Activated CD8-positive, alpha-beta T cell treated with anti-CD3 and anti-CD28 coated beads, Interleukin-2, amount 10 ng/mL, durations not matched to agents 7 days and 5 days (primary cell): ENCODE measurements at regions of chr16 and their contacts with region 1.

Region 1: DNA sequence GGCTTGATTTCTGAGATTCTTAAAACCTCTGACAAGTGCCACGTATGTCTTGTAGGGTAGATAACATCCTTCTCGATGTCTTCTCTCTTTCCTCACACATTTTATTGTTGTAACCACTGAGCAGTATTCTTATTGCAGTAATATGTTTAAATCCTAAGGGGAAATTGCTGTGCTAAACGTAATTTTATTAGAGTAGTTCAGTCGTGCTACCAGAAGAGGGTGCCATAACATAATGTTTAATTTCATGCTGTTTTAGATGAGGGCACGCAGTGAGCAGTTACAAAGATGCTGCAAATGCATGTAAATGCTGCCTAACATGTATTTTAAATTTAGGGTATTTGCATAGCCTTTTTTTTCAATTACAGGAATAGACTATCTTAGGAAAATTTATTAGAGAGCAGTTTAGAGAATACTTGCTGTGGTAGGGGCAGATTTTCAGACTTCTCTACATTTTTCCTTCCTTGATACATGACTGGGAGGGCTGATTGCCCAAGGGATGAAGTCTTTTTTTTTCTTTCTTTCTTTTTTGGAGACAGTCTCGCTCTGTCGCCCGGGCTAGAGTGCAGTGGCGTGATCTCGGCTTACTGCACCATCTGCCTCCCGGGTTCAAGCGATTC is 51.7 kb downstream of the GAN start:
- DNase-seq: no peak
- ATAC-seq: peak; percentile 63
- H3K4me3 Mint-ChIP-seq: no peak overlapping the region
- H3K27ac Mint-ChIP-seq: no peak overlapping the region
- H3K4me1 Mint-ChIP-seq: peaks cover 11% of the 10 kb centered on the region
- H3K27me3 Mint-ChIP-seq: no peaks in the 10 kb centered on the region

Region 2: DNA sequence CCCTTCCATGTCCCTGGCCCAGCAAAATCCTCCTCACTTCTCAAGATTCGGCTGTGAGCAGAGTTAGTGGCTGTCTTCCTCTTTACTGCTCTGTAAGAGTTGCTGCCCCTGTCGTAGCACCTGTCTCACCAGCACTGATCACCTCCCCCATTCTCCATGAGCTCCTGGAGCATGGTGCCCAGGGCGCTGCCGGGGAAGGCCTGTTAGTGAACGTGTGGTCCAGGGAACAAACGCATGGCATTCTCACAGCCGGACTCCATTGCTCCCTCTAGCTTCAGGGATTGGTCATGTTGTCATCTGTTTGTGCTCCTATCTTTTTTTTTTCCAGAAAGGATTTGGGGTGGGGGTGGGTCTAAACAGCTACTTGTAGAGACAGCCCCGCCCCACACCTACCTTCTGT is 219.4 kb after region 1 on chr16:
- CTCF ChIA-PET with region 1: no interaction called
- POLR2A ChIA-PET with region 1: no interaction called
- DNase-seq: no peak
- ATAC-seq: no peak
- H3K4me3 Mint-ChIP-seq: no peak overlapping the region
- H3K27ac Mint-ChIP-seq: peak overlapping the region; percentile 41
- H3K4me1 Mint-ChIP-seq: no peaks in the 10 kb centered on the region
- H3K27me3 Mint-ChIP-seq: no peaks in the 10 kb centered on the region

Region 3: GRCh38 chr16:81723098-81723723 is 356.8 kb after region 1 on chr16:
- CTCF ChIA-PET with region 1: interaction called, 13 read pairs
- POLR2A ChIA-PET with region 1: no interaction called
- DNase-seq: peak; percentile 72
- ATAC-seq: peak; percentile 85
- H3K4me3 Mint-ChIP-seq: no peak overlapping the region
- H3K27ac Mint-ChIP-seq: no peak overlapping the region
- H3K4me1 Mint-ChIP-seq: peaks cover 16% of the 10 kb centered on the region
- H3K27me3 Mint-ChIP-seq: peaks cover 15% of the 10 kb centered on the region

Region 4: GRCh38 chr16:81730090-81731051 is 363.9 kb after region 1 on chr16:
- CTCF ChIA-PET with region 1: interaction called, 17 read pairs
- POLR2A ChIA-PET with region 1: no interaction called
- DNase-seq: peak; percentile 67
- ATAC-seq: peak; percentile 92
- H3K4me3 Mint-ChIP-seq: peak overlapping the region; percentile 75
- H3K27ac Mint-ChIP-seq: peak overlapping the region; percentile 86
- H3K4me1 Mint-ChIP-seq: peaks cover 17% of the 10 kb centered on the region
- H3K27me3 Mint-ChIP-seq: peaks cover 12% of the 10 kb centered on the region